MCF 10A (cell line): ENCODE measurements at regions of chr2 and their contacts with region 1.

Region 1: DNA sequence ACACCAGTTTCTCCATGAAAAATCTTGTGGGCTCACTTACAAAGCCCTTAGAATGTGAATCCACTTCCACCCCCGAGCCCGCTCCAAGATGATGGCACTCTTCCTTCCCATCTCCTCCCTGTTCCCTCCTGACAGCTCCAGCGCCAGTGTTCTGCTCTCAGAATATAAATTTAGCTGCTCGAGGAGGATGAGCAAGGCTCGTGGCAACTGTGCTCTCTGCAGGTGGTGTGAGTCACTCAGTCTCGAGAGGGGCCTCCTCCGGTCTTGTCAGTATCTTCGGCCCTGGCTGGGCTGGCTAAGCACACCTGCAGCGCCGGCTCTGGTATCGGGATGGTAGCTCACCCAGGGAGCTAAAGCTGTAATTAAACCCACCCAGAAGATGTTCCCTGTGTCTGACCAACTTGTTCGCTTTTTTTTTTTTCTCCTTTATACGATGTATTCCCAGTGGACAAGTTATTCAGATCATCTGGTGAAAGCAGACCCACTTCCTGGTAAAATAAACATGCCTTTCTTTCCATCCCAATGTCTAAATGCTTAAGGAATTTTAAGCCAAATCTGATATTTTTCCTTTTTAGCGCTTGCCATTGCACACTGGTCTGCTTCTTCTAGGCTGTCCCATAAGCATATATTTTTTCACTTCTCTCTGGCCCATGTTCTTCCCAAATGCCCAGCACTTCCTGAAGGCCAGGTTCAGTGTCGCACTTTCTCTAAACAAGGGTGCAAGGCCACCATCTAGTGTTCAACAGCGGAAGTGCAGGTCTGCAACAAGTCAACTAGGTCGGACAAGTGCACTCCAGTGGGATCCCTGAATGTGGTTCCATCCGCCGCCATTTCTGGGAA is 31.4 kb upstream of the YPEL5 start:
- DNase-seq: peak; percentile 85
- H3K4me3 Mint-ChIP-seq: no peak overlapping the region
- H3K27ac Mint-ChIP-seq: no peak overlapping the region
- H3K4me1 Mint-ChIP-seq: peaks cover 23% of the 10 kb centered on the region
- H3K27me3 Mint-ChIP-seq: no peaks in the 10 kb centered on the region
- CTCF ChIP-seq: peak; percentile 92

Region 2: DNA sequence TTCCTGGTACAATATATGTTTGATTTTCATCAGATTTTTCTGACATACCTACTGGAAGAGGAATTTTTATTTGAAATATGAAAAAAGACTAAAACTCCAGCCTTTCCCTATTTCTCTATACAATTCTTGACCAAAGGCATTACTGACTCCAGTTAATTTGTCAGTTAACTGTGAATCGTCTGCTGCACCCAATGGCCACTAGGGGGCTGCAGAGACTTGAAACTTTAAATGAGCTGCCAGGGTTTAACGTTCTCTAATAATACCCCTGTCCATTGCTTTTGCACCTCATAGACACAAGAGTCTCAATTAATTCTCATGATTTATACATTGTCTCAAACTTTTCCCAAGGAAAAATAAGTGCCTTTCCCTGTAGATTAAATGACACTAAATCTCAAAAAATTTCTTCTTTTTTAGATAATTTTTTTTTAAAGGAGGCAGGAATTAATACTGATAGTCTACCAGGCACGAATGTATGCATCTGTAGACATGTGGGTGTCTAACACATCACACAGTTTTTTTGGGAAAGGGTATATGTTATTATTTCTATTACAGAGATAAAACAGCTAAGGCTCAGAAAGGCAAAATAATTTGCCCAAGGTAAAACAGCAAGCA is 192.1 kb before region 1 on chr2:
- CTCF ChIA-PET with region 1: interaction called, 7 read pairs
- POLR2A ChIA-PET with region 1: no interaction called
- intact Hi-C with region 1: loop called (anchors 1 kb)
- DNase-seq: peak; percentile 83
- H3K4me3 Mint-ChIP-seq: no peak overlapping the region
- H3K27ac Mint-ChIP-seq: no peak overlapping the region
- H3K4me1 Mint-ChIP-seq: no peaks in the 10 kb centered on the region
- H3K27me3 Mint-ChIP-seq: peaks cover 42% of the 10 kb centered on the region
- CTCF ChIP-seq: peak; percentile 86

Region 3: DNA sequence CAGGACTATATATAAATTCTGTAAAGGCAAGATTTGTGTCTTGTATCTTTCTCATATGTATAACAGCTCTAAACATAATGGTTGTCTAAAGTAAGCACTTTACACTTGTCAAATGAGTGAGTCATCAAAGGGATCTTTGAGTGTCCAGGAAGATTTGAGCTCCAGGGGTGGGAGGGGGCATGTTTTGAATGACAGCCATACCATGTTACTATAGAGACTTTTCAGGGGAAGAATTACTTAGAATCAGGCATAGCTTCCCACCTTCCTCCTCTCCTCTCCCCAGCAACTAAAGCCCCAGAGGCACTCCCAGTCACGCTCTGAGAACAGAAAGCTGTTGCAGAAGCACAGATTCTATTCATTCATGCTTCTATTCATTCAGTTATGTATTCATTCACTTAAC is 128.2 kb before region 1 on chr2:
- CTCF ChIA-PET with region 1: no interaction called
- POLR2A ChIA-PET with region 1: no interaction called
- intact Hi-C with region 1: no loop called
- DNase-seq: no peak
- H3K4me3 Mint-ChIP-seq: no peak overlapping the region
- H3K27ac Mint-ChIP-seq: no peak overlapping the region
- H3K4me1 Mint-ChIP-seq: peaks cover 7% of the 10 kb centered on the region
- H3K27me3 Mint-ChIP-seq: peaks cover 10% of the 10 kb centered on the region
- CTCF ChIP-seq: no peak

Region 4: GRCh38 chr2:30072250-30072842 is 43.0 kb before region 1 on chr2:
- CTCF ChIA-PET with region 1: interaction called, 5 read pairs
- POLR2A ChIA-PET with region 1: no interaction called
- intact Hi-C with region 1: loop called (anchors 1 kb)
- DNase-seq: peak; percentile 85
- H3K4me3 Mint-ChIP-seq: no peak overlapping the region
- H3K27ac Mint-ChIP-seq: no peak overlapping the region
- H3K4me1 Mint-ChIP-seq: no peaks in the 10 kb centered on the region
- H3K27me3 Mint-ChIP-seq: peaks cover 65% of the 10 kb centered on the region
- CTCF ChIP-seq: peak; percentile 74

Region 5: DNA sequence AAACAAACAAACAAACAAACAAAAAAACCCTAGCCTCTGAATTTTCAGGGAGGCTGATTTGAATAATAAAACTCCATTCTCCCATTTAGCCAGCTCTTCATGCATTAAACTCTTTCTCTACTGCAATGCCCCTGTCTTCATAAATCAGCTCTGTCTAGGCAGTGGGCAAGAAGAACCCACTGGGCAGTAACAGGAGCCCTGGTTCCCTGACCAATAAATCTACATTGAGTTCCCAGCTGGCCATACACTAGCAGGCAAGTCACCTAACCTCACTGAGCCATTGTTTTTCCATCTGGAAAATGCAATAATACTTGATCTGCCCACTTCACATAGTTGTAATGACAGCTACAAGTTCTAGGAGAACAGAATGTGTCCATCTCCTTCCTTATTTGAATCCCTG is 26.2 kb before region 1 on chr2:
- CTCF ChIA-PET with region 1: interaction called, 37 read pairs
- POLR2A ChIA-PET with region 1: interaction called, 6 read pairs
- intact Hi-C with region 1: loop called (anchors 1 kb)
- DNase-seq: no peak
- H3K4me3 Mint-ChIP-seq: no peak overlapping the region
- H3K27ac Mint-ChIP-seq: no peak overlapping the region
- H3K4me1 Mint-ChIP-seq: no peaks in the 10 kb centered on the region
- H3K27me3 Mint-ChIP-seq: peaks cover 53% of the 10 kb centered on the region
- CTCF ChIP-seq: no peak

Region 6: GRCh38 chr2:30095402-30095801 is 20.0 kb before region 1 on chr2:
- CTCF ChIA-PET with region 1: interaction called, 37 read pairs
- POLR2A ChIA-PET with region 1: interaction called, 6 read pairs
- intact Hi-C with region 1: loop called (anchors 1 kb)
- DNase-seq: no peak
- H3K4me3 Mint-ChIP-seq: no peak overlapping the region
- H3K27ac Mint-ChIP-seq: no peak overlapping the region
- H3K4me1 Mint-ChIP-seq: no peaks in the 10 kb centered on the region
- H3K27me3 Mint-ChIP-seq: peaks cover 68% of the 10 kb centered on the region
- CTCF ChIP-seq: no peak

Region 7: GRCh38 chr2:30139131-30139870 is 23.9 kb after region 1 on chr2:
- CTCF ChIA-PET with region 1: interaction called, 36 read pairs
- POLR2A ChIA-PET with region 1: no interaction called
- intact Hi-C with region 1: no loop called
- DNase-seq: no peak
- H3K4me3 Mint-ChIP-seq: no peak overlapping the region
- H3K27ac Mint-ChIP-seq: peak overlapping the region; percentile 63
- H3K4me1 Mint-ChIP-seq: peaks cover 24% of the 10 kb centered on the region
- H3K27me3 Mint-ChIP-seq: no peaks in the 10 kb centered on the region
- CTCF ChIP-seq: no peak

Region 8: GRCh38 chr2:30146438-30147147 is 31.2 kb after region 1 on chr2 and contains the start of gene YPEL5:
- CTCF ChIA-PET with region 1: interaction called, 11 read pairs
- POLR2A ChIA-PET with region 1: interaction called, 31 read pairs
- intact Hi-C with region 1: no loop called
- DNase-seq: peak; percentile 99
- H3K4me3 Mint-ChIP-seq: peak within 1 kb of the TSS; percentile 77
- H3K27ac Mint-ChIP-seq: peak within 1 kb of the TSS; percentile 95
- H3K4me1 Mint-ChIP-seq: peaks cover 29% of the 10 kb centered on the region
- H3K27me3 Mint-ChIP-seq: no peaks in the 10 kb centered on the region
- CTCF ChIP-seq: no peak
- total RNA-seq, gene YPEL5: 62.5 and 80.6 TPM in 2 replicates